ENCODE measurements at regions of chr17 and their contacts with region 1.

Region 1: GRCh38 chr17:41966463-41967140 is at the start of gene CNP:
- DNase-seq: peak; percentile 88 to 95
- ATAC-seq: peak; percentile 92 to 95 (median 92)
- H3K4me3 ChIP-seq: peak within 1 kb of the TSS; percentile 91
- H3K4me3 Mint-ChIP-seq: peak within 1 kb of the TSS; percentile 74
- H3K27ac ChIP-seq: peak within 1 kb of the TSS; percentile 72
- H3K27ac Mint-ChIP-seq: peak within 1 kb of the TSS; percentile 68 to 76
- H3K4me1 ChIP-seq: peaks cover 27% of the 10 kb centered on the region
- H3K4me1 Mint-ChIP-seq: peaks cover 24 to 32% of the 10 kb centered on the region in 2 donors
- H3K27me3 ChIP-seq: no peaks in the 10 kb centered on the region
- H3K27me3 Mint-ChIP-seq: no peaks in the 10 kb centered on the region
- CTCF ChIP-seq: no peak
- total RNA-seq, gene CNP: 32.4 to 44.8 (median 38.2) TPM

Region 2: DNA sequence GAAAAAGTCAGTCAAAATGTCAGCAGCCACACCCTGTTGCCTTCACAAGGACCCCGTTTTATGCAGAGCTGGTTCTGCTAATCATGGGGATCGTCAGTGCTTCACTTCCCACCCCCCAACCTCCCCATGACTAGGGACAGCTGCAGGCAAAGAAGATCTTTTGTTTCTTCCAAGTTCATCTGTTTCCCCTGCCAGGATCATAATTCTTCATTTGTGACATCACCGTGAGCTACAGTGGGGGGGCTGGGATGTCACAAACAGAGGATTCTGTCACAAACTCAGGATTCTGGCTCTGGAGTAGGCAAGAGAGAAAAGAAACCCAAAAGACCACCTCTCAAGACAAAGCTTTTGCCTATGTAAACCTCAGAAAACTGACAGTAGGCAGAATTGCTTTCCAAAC is 26.0 kb after region 1 on chr17:
- intact Hi-C with region 1: no loop called
- DNase-seq: no peak
- ATAC-seq: no peak
- H3K4me3 ChIP-seq: no peak overlapping the region
- H3K4me3 Mint-ChIP-seq: no peak overlapping the region
- H3K27ac ChIP-seq: no peak overlapping the region
- H3K27ac Mint-ChIP-seq: no peak overlapping the region
- H3K4me1 ChIP-seq: no peaks in the 10 kb centered on the region
- H3K4me1 Mint-ChIP-seq: no peaks in the 10 kb centered on the region
- H3K27me3 ChIP-seq: no peaks in the 10 kb centered on the region
- H3K27me3 Mint-ChIP-seq: no peaks in the 10 kb centered on the region
- CTCF ChIP-seq: no peak

Region 3: GRCh38 chr17:42016925-42017796 is 50.6 kb after region 1 on chr17 and contains the start of gene DNAJC7:
- intact Hi-C with region 1: loop called (anchors 1 kb)
- DNase-seq: peak; percentile 86 to 94
- ATAC-seq: peak; percentile 79 to 92 (median 85)
- H3K4me3 ChIP-seq: peak within 1 kb of the TSS; percentile 99
- H3K4me3 Mint-ChIP-seq: peak within 1 kb of the TSS; percentile 99
- H3K27ac ChIP-seq: peak within 1 kb of the TSS; percentile 98
- H3K27ac Mint-ChIP-seq: peak within 1 kb of the TSS; percentile 96 to 99
- H3K4me1 ChIP-seq: peaks cover 46% of the 10 kb centered on the region
- H3K4me1 Mint-ChIP-seq: peaks cover 80 to 81% of the 10 kb centered on the region in 2 donors
- H3K27me3 ChIP-seq: no peaks in the 10 kb centered on the region
- H3K27me3 Mint-ChIP-seq: no peaks in the 10 kb centered on the region
- CTCF ChIP-seq: no peak
- total RNA-seq, gene DNAJC7: 123 to 159 (median 149) TPM